Activated B cell treated with CpG ODN at 0.5 μM for 24 hours (primary cell): ENCODE measurements at regions of chr14 and their contacts with region 1.

Region 1: GRCh38 chr14:92680781-92681650 is 67.4 kb downstream of the LGMN start:
- DNase-seq: peak; percentile 75
- ATAC-seq: peak; percentile 15
- H3K4me3 Mint-ChIP-seq: no peak overlapping the region
- H3K27ac Mint-ChIP-seq: peak overlapping the region; percentile 70
- H3K4me1 Mint-ChIP-seq: peaks cover 39% of the 10 kb centered on the region
- H3K27me3 Mint-ChIP-seq: no peaks in the 10 kb centered on the region
- CTCF ChIP-seq: no peak

Region 2: DNA sequence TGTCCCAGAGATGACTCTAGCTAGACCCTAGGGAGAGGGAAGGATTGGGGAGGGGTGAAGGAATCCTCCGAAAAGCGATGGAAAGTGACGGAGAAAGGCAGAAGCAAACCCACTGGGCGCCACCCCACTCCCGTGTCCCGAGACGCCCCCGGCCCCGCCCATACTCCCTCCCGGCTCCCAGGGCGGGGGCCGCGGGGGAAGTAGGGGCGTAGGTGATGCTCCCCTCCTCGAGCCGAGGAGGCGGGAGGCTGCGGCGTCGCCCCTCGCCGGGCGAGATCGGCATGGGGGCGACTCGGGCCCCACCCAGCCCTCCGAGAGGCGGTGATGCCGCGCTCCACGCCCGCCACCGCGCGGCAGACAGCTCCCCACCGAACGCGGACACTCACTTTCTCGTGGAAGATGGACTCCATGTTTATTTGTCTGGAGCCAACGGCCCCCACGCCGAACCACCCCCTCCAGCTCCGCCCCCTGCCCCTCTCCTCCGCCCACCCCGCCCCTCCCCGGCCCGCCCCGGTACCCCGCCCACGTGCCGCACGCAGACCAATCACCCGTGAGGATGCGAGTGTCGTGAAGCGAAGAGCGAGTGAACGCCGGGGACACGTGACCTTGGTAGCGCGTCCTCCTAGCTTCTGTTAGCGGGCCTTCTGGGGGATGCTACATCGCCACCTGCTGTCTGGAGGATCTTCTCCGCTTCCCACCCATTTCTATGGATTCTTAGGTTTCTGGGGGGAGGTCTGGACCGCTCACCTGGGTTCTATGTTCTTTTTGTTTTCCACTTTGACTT is 574.7 kb before region 1 on chr14 and contains the start of gene ATXN3:
- CTCF ChIA-PET with region 1: interaction called, 4 read pairs
- POLR2A ChIA-PET with region 1: interaction called, 7 read pairs
- intact Hi-C with region 1: loop called (anchors 1 kb)
- DNase-seq: peak; percentile 81
- ATAC-seq: peak; percentile 91
- H3K4me3 Mint-ChIP-seq: peak within 1 kb of the TSS; percentile 100
- H3K27ac Mint-ChIP-seq: peak within 1 kb of the TSS; percentile 92
- H3K4me1 Mint-ChIP-seq: peaks cover 46% of the 10 kb centered on the region
- H3K27me3 Mint-ChIP-seq: no peaks in the 10 kb centered on the region
- CTCF ChIP-seq: no peak
- total RNA-seq, gene ATXN3: 23.8 and 29.3 TPM in 2 replicates

Region 3: DNA sequence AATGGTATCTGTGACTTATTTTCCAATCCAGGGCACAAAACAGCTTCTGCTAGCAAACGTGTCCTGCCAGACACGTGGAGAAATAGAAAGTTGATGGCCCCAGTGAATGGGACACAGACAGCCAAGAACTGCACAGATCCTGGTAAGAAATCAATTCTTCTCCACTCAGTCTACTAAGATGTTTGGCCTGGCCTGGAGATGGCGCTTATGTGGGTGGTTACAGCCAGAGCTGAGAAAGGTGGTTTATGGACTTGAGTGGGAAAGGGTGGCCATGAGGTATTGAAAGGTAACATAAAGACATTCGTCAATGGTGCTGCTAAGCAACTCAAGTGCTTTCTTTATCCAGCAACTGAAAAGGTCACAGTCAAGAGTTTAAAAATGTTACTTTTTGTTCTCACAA is 355.2 kb before region 1 on chr14:
- CTCF ChIA-PET with region 1: no interaction called
- POLR2A ChIA-PET with region 1: no interaction called
- intact Hi-C with region 1: loop called (anchors 5 kb)
- DNase-seq: no peak
- ATAC-seq: no peak
- H3K4me3 Mint-ChIP-seq: no peak overlapping the region
- H3K27ac Mint-ChIP-seq: no peak overlapping the region
- H3K4me1 Mint-ChIP-seq: peaks cover 3% of the 10 kb centered on the region
- H3K27me3 Mint-ChIP-seq: peaks cover 38% of the 10 kb centered on the region
- CTCF ChIP-seq: no peak

Region 4: GRCh38 chr14:92507174-92507768 is 173.7 kb before region 1 on chr14:
- CTCF ChIA-PET with region 1: interaction called, 3 read pairs
- POLR2A ChIA-PET with region 1: no interaction called
- intact Hi-C with region 1: loop called (anchors 2 kb)
- DNase-seq: peak; percentile 49
- ATAC-seq: peak; percentile 86
- H3K4me3 Mint-ChIP-seq: peak overlapping the region; percentile 39
- H3K27ac Mint-ChIP-seq: peak overlapping the region; percentile 50
- H3K4me1 Mint-ChIP-seq: peaks cover 56% of the 10 kb centered on the region
- H3K27me3 Mint-ChIP-seq: no peaks in the 10 kb centered on the region
- CTCF ChIP-seq: no peak

Region 5: DNA sequence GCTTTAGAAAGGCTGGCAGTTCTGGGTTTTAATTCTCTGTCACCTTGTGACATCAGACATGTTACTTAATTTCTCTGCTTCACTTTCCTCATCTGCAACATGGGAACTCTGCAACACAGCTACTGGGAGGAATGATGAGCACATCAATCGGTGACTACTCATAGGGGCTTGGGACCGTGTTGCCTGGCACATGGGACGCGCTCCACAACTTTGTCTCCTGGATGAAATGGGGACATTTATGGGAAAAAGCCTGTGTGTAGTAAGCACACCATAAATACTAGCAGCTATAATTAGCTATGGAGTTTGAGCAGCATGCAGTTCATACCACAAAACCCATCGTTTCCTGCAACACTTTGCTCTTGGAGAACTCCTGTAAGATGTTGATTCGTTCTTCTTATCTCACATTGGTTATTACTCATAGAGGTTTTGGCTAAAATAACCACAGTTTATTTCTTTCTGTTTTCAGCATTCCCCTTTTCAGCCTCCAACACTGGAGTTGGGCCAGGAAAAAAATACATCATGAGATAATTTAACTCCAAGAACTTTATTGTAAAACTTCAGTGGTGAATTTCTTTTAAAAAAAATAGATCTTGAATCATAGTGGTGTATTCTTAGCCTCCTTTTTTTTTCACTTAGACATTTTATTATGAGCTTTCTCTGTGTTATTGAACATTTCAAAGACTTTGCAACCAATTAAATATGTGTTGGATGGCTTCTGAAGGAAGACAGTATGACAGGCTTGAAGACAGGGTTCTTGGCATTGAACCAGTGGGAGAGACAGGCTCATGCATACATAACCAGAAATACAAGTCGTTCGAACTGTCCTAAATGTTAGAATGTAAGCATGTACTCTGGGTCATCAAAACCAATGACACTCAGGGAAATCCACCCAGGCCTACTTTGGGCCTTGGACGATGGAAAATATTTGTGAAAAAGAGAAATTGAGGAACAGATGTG is 94.8 kb before region 1 on chr14:
- CTCF ChIA-PET with region 1: interaction called, 61 read pairs
- POLR2A ChIA-PET with region 1: interaction called, 6 read pairs
- intact Hi-C with region 1: loop called (anchors 1 kb)
- DNase-seq: no peak
- ATAC-seq: no peak
- H3K4me3 Mint-ChIP-seq: peak overlapping the region; percentile 29
- H3K27ac Mint-ChIP-seq: no peak overlapping the region
- H3K4me1 Mint-ChIP-seq: peaks cover 79% of the 10 kb centered on the region
- H3K27me3 Mint-ChIP-seq: no peaks in the 10 kb centered on the region
- CTCF ChIP-seq: no peak

Region 6: GRCh38 chr14:92659765-92660561 is 21.1 kb before region 1 on chr14:
- CTCF ChIA-PET with region 1: interaction called, 5 read pairs
- POLR2A ChIA-PET with region 1: interaction called, 144 read pairs
- intact Hi-C with region 1: loop called (anchors 1 kb)
- DNase-seq: no peak
- ATAC-seq: peak; percentile 67
- H3K4me3 Mint-ChIP-seq: peak overlapping the region; percentile 36
- H3K27ac Mint-ChIP-seq: peak overlapping the region; percentile 74
- H3K4me1 Mint-ChIP-seq: peaks cover 97% of the 10 kb centered on the region
- H3K27me3 Mint-ChIP-seq: no peaks in the 10 kb centered on the region
- CTCF ChIP-seq: no peak

Region 7: GRCh38 chr14:93959239-93960107 is 1278.5 kb after region 1 on chr14:
- CTCF ChIA-PET with region 1: no interaction called
- POLR2A ChIA-PET with region 1: no interaction called
- intact Hi-C with region 1: loop called (anchors 5 kb)
- DNase-seq: peak; percentile 81
- ATAC-seq: peak; percentile 75
- H3K4me3 Mint-ChIP-seq: peak overlapping the region; percentile 80
- H3K27ac Mint-ChIP-seq: peak overlapping the region; percentile 93
- H3K4me1 Mint-ChIP-seq: peaks cover 95% of the 10 kb centered on the region
- H3K27me3 Mint-ChIP-seq: no peaks in the 10 kb centered on the region
- CTCF ChIP-seq: no peak